ENCODE measurements at regions of chr12 and their contacts with region 1.

Region 1: GRCh38 chr12:2959505-2960389 is 550 bp downstream of the TEAD4 start:
- DNase-seq: peak; percentile 76 to 80
- ATAC-seq: peak; percentile 61 to 70 (median 68)
- H3K4me3 ChIP-seq: peak overlapping the region; percentile 76
- H3K27ac ChIP-seq: peak overlapping the region; percentile 85
- H3K4me1 ChIP-seq: peaks cover 23% of the 10 kb centered on the region
- H3K27me3 ChIP-seq: no peaks in the 10 kb centered on the region
- CTCF ChIP-seq: peak; percentile 9

Region 2: DNA sequence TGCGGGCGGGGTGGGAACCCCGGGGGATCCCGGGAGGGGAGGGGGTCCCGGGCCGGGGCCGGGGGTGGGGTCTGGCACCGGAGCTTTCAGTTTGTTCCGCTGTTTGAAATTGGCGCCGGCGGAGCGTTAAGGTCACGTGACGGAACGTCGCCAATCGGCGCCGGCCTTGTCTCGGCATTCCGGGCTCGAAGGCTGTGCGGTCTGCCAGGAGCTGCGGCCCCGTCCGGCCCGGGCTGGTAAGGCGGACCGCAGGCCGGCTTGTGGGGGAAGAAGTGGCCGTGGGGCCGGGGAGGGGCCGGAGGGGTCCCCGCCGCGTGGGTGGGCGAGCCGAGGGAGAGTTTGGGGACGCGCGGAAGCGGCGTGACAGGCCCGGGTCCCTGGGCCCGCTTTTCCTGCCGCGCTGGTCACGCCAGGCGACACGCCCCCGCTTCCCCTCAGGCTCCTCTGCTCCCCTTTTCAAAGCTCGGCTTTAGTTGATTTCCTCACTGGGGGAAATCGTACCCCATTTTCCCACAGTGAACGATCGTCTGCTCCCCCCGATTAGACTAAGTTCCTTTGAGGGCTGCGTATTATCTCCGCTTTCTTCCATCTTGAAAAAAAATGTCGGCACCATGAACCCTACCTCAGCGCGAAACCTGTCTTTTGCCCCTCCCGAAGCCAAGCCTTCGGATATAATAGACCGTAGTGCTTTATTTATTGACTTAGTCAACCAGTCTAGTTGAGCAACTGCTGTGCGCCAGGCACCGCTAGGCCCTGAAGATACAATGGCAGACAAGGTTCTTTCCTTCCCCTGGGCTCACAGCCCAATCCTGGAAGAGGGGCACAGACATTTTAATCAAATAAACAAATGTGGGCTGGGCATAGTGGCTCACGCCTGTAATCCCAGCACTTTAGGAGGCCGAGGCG is 82.4 kb before region 1 on chr12 and contains the starts of genes FOXM1 and RHNO1:
- intact Hi-C with region 1: no loop called
- DNase-seq: peak; percentile 90 to 96
- ATAC-seq: peak; percentile 96 to 99 (median 97)
- H3K4me3 ChIP-seq: peak within 1 kb of the TSS; percentile 78
- H3K27ac ChIP-seq: peak within 1 kb of the TSS; percentile 88
- H3K4me1 ChIP-seq: peaks cover 11% of the 10 kb centered on the region
- H3K27me3 ChIP-seq: no peaks in the 10 kb centered on the region
- CTCF ChIP-seq: peak; percentile 31
- total RNA-seq, gene FOXM1: 0.15 to 0.59 (median 0.52) TPM in 3 of 4 donors, not detected in the other
- total RNA-seq, gene RHNO1: 1.8 to 11.7 (median 5.5) TPM

Region 3: GRCh38 chr12:2974560-2974971 is 14.8 kb after region 1 on chr12:
- intact Hi-C with region 1: loop called in 1 of 2 experiments (anchors 1 kb)
- DNase-seq: no peak
- ATAC-seq: peak; percentile 60 to 83 (median 64)
- H3K4me3 ChIP-seq: peak overlapping the region; percentile 28
- H3K27ac ChIP-seq: peak overlapping the region; percentile 86
- H3K4me1 ChIP-seq: peaks cover 59% of the 10 kb centered on the region
- H3K27me3 ChIP-seq: no peaks in the 10 kb centered on the region
- CTCF ChIP-seq: no peak

Region 4: GRCh38 chr12:2998789-2999264 is 39.1 kb after region 1 on chr12:
- intact Hi-C with region 1: loop called (anchors 2 to 5 kb)
- DNase-seq: peak; percentile 91 to 98
- ATAC-seq: peak; percentile 85 to 92 (median 88)
- H3K4me3 ChIP-seq: peak overlapping the region; percentile 44
- H3K27ac ChIP-seq: peak overlapping the region; percentile 90
- H3K4me1 ChIP-seq: peaks cover 71% of the 10 kb centered on the region
- H3K27me3 ChIP-seq: no peaks in the 10 kb centered on the region
- CTCF ChIP-seq: no peak

Region 5: GRCh38 chr12:3038926-3039510 is 79.3 kb after region 1 on chr12:
- intact Hi-C with region 1: no loop called
- DNase-seq: no peak
- ATAC-seq: no peak
- H3K4me3 ChIP-seq: no peak overlapping the region
- H3K27ac ChIP-seq: no peak overlapping the region
- H3K4me1 ChIP-seq: peaks cover 26% of the 10 kb centered on the region
- H3K27me3 ChIP-seq: no peaks in the 10 kb centered on the region
- CTCF ChIP-seq: no peak

Region 6: GRCh38 chr12:3107071-3107583 is 147.4 kb after region 1 on chr12:
- intact Hi-C with region 1: no loop called
- DNase-seq: no peak
- ATAC-seq: no peak
- H3K4me3 ChIP-seq: no peak overlapping the region
- H3K27ac ChIP-seq: no peak overlapping the region
- H3K4me1 ChIP-seq: peaks cover 3% of the 10 kb centered on the region
- H3K27me3 ChIP-seq: no peaks in the 10 kb centered on the region
- CTCF ChIP-seq: no peak